ENCODE measurements at regions of chr10 and their contacts with region 1.

Region 1: GRCh38 chr10:77173615-77174461 is 463.8 kb downstream of the KCNMA1 start:
- DNase-seq: peak; percentile 72 to 91
- H3K4me3 ChIP-seq: no peak overlapping the region
- H3K27ac ChIP-seq: no peak overlapping the region
- H3K4me1 ChIP-seq: no peaks in the 10 kb centered on the region
- H3K27me3 ChIP-seq: no peaks in the 10 kb centered on the region
- CTCF ChIP-seq: peak; percentile 59 to 96 (median 92)
- EP300 ChIP-seq: no peak
- POLR2A ChIP-seq: no peak
- RAD21 ChIP-seq: peak; percentile 93 to 98

Region 2: DNA sequence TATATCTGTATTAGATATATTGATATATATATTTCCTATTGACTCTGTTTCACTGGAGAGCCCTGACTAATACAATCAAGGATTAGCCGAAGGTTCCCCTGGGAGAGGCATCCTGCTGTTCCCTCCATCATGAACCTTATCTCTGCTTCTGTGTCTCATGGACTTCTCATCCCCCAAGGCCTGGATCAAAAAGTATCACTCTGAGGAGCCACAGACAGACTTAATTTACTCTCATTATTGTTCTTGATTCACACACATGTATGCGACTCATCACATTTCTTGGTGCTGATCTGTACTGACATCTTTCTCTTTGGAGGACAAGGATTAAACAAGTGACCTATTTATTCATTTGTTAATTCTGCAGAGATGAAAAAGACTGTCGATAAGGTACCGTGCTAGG is 86.5 kb before region 1 on chr10:
- CTCF ChIA-PET with region 1: no interaction called
- POLR2A ChIA-PET with region 1: no interaction called
- DNase-seq: no peak
- H3K4me3 ChIP-seq: no peak overlapping the region
- H3K27ac ChIP-seq: no peak overlapping the region
- H3K4me1 ChIP-seq: peaks cover 2 to 7% (median 4%) of the 10 kb centered on the region in 4 experiments; a peak in 5 of 7 replicates
- H3K27me3 ChIP-seq: no peaks in the 10 kb centered on the region
- CTCF ChIP-seq: no peak
- EP300 ChIP-seq: no peak
- POLR2A ChIP-seq: no peak
- RAD21 ChIP-seq: no peak

Region 3: DNA sequence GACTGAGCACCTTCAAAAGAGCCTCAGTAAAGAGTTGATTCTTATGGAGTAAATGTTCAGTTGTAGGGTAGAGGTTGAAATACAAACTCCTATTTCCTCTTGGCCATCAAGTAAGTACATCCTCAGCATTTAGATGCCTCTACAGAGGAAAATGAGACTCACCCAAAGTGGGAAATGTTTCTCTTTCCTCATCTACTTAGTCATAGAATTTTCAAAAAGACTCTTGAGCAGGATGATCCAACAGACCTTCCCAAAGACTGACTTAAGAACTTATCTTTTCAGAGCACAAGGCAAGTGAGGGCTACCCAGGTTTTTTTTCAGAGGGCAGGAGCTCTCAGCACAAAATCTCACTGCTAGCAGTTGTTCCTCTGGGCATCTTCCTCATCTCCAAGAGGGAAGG is 14.7 kb after region 1 on chr10:
- CTCF ChIA-PET with region 1: interaction called, 18 read pairs
- POLR2A ChIA-PET with region 1: interaction called, 3 read pairs
- DNase-seq: no peak
- H3K4me3 ChIP-seq: no peak overlapping the region
- H3K27ac ChIP-seq: no peak overlapping the region
- H3K4me1 ChIP-seq: peaks cover 0 to 6% (median 3%) of the 10 kb centered on the region in 4 experiments; a peak in 4 of 7 replicates
- H3K27me3 ChIP-seq: no peaks in the 10 kb centered on the region
- CTCF ChIP-seq: no peak
- EP300 ChIP-seq: no peak
- POLR2A ChIP-seq: no peak
- RAD21 ChIP-seq: no peak

Region 4: GRCh38 chr10:77251297-77252013 is 77.6 kb after region 1 on chr10:
- CTCF ChIA-PET with region 1: interaction called, 34 read pairs
- POLR2A ChIA-PET with region 1: no interaction called
- DNase-seq: no peak
- H3K4me3 ChIP-seq: no peak overlapping the region
- H3K27ac ChIP-seq: no peak overlapping the region
- H3K4me1 ChIP-seq: no peaks in the 10 kb centered on the region
- H3K27me3 ChIP-seq: no peaks in the 10 kb centered on the region; a peak in 1 of 7 replicates
- CTCF ChIP-seq: peak; percentile 73 to 87 (median 75)
- EP300 ChIP-seq: no peak
- POLR2A ChIP-seq: no peak
- RAD21 ChIP-seq: peak; percentile 88 to 91

Region 5: GRCh38 chr10:77391605-77392235 is 217.9 kb after region 1 on chr10:
- CTCF ChIA-PET with region 1: interaction called, 23 read pairs
- POLR2A ChIA-PET with region 1: no interaction called
- DNase-seq: peak; percentile 62 to 97
- H3K4me3 ChIP-seq: no peak overlapping the region
- H3K27ac ChIP-seq: no peak overlapping the region
- H3K4me1 ChIP-seq: peaks cover 0 to 8% (median 5%) of the 10 kb centered on the region in 4 experiments; a peak in 4 of 7 replicates
- H3K27me3 ChIP-seq: no peaks in the 10 kb centered on the region
- CTCF ChIP-seq: peak; percentile 68 to 82 (median 70)
- EP300 ChIP-seq: no peak
- POLR2A ChIP-seq: no peak
- RAD21 ChIP-seq: peak; percentile 71 to 83

Region 6: GRCh38 chr10:77603534-77603927 is 429.7 kb after region 1 on chr10:
- CTCF ChIA-PET with region 1: interaction called, 24 read pairs
- POLR2A ChIA-PET with region 1: no interaction called
- DNase-seq: no peak
- H3K4me3 ChIP-seq: no peak overlapping the region
- H3K27ac ChIP-seq: no peak overlapping the region
- H3K4me1 ChIP-seq: peaks cover 1 to 8% (median 4%) of the 10 kb centered on the region in 4 experiments; a peak in 4 of 7 replicates
- H3K27me3 ChIP-seq: no peaks in the 10 kb centered on the region
- CTCF ChIP-seq: no peak
- EP300 ChIP-seq: no peak
- POLR2A ChIP-seq: no peak
- RAD21 ChIP-seq: no peak

Region 7: DNA sequence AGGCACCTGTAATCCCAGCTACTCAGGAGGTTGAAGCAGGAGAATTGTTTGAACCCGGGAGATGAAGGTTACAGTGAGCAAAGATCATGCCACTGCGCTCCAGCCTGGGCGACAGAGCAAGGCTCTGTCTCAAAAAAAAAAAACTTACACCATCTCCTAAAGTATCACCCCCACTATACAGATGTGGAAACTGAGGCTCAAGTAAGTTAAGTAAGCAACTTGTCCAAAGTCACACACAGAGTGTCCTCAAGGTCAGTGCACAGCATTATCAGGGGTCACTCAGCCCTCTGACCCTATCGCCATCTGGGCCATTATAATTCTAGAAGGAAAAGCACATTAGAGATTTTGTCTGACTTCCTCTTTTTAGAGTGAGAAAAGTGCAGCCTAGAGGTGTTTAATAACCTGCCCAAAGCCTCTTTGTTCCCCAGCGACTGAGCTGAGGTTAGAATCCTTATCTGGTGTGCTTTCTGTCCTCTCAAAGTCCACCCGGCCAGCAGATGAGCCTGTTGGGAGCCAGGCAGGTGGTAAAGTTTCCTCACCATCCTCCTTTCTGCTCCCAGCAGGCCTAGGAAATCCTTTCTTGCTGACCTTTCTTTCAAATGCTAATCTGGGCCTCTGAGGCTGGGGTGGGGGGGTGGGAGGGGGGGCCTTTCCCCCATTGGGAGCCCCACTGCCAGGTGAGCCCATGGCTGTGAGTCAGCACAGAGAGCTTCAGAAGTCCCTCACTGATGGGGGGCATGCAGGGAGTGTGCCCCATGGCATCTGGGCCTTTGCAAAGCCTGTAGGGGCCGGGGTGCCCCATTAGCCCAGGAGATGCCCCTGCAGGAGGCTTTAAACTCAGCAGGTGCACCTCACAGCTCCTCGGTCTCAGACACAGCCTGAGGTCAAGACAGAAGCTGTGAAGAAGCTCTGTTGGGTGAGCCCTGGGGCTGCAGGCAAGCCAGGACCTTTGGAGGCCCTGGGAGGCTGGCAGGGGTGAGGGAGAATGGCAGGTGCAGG is 475.8 kb after region 1 on chr10:
- CTCF ChIA-PET with region 1: interaction called, 96 read pairs
- POLR2A ChIA-PET with region 1: no interaction called
- DNase-seq: peak in 1 of 2 experiments; percentile 57
- H3K4me3 ChIP-seq: no peak overlapping the region
- H3K27ac ChIP-seq: no peak overlapping the region
- H3K4me1 ChIP-seq: peaks cover 4 to 17% (median 11%) of the 10 kb centered on the region in 4 experiments; a peak in 6 of 7 replicates
- H3K27me3 ChIP-seq: no peaks in the 10 kb centered on the region
- CTCF ChIP-seq: no peak
- EP300 ChIP-seq: no peak
- POLR2A ChIP-seq: no peak
- RAD21 ChIP-seq: no peak

Measured in H1 (cell line).